ENCODE measurements at regions of chr17 and their contacts with region 1.

Region 1: DNA sequence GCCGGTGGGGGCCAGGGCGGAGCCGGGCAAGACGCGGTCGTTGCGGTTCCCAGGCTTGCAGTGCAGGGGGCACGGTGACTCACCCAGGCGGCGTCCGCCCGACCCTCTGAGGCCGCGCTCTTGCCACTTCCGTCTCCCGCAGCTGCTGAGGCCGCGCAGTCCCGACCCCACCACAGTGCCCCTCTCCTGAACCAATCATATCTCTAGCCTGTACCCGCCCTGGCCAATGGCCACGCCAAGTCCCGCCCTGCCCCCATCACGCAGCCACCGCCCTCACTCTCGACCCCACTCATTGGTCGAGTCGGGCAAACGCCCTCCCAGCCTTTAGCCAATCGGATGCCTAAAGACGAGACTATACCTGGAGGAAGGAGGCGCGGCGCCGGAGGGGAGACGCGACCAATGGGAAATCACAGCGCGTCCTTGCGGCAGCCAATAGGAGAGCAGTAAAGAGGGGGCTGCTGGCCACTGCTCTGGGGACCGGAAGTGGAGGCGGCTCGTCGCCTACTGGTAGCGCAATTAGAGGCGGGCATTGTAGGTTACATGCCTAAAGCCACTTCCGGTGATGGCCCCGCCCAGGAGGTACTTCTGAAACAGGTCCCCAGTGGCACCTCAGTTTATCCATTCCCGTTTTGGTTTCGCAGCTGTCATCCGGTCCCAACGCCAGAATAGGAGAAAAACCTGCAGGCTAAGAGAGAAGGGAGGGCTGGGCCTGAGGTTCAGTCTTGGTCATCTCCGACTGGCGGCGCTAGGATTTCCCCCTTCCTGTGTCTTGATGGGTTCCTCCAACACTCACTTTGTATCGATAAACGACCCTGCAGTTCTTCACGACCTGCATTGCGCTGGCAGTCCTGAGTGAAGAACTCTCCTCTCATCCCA is 3.5 kb upstream of the MTMR4 start:
- DNase-seq: peak; percentile 92 to 100 (median 100)
- ATAC-seq: peak; percentile 89
- H3K4me3 ChIP-seq: peak overlapping the region; percentile 99
- H3K4me3 Mint-ChIP-seq: peak overlapping the region; percentile 92 to 98 (median 96)
- H3K27ac ChIP-seq: peak overlapping the region; percentile 84
- H3K27ac Mint-ChIP-seq: peak overlapping the region; percentile 82 to 97 (median 95)
- H3K4me1 ChIP-seq: peaks cover 20 to 28% of the 10 kb centered on the region in 2 donors
- H3K4me1 Mint-ChIP-seq: peaks cover 30 to 49% (median 46%) of the 10 kb centered on the region in 7 donors
- H3K27me3 ChIP-seq: no peaks in the 10 kb centered on the region
- H3K27me3 Mint-ChIP-seq: peaks cover 0 to 5% (median 0%) of the 10 kb centered on the region in 5 donors

Region 2: GRCh38 chr17:57849874-57850754 is 667.9 kb before region 1 on chr17 and contains the start of gene MRPS23:
- CTCF ChIA-PET with region 1: no interaction called
- POLR2A ChIA-PET with region 1: no interaction called
- intact Hi-C with region 1: loop called in 1 of 2 experiments (anchors 1 kb)
- DNase-seq: peak; percentile 85 to 98 (median 94)
- ATAC-seq: peak; percentile 99
- H3K4me3 ChIP-seq: peak within 1 kb of the TSS; percentile 88
- H3K4me3 Mint-ChIP-seq: peak within 1 kb of the TSS; percentile 92 to 100 (median 99)
- H3K27ac ChIP-seq: peak within 1 kb of the TSS; percentile 86
- H3K27ac Mint-ChIP-seq: peak within 1 kb of the TSS; percentile 97 to 100 (median 100)
- H3K4me1 ChIP-seq: peaks cover 20 to 27% of the 10 kb centered on the region in 2 donors
- H3K4me1 Mint-ChIP-seq: peaks cover 24 to 61% (median 49%) of the 10 kb centered on the region in 7 donors
- H3K27me3 ChIP-seq: no peaks in the 10 kb centered on the region
- H3K27me3 Mint-ChIP-seq: no peaks in the 10 kb centered on the region
- total RNA-seq, gene MRPS23: 13.0 to 40.5 (median 24.6) TPM

Region 3: DNA sequence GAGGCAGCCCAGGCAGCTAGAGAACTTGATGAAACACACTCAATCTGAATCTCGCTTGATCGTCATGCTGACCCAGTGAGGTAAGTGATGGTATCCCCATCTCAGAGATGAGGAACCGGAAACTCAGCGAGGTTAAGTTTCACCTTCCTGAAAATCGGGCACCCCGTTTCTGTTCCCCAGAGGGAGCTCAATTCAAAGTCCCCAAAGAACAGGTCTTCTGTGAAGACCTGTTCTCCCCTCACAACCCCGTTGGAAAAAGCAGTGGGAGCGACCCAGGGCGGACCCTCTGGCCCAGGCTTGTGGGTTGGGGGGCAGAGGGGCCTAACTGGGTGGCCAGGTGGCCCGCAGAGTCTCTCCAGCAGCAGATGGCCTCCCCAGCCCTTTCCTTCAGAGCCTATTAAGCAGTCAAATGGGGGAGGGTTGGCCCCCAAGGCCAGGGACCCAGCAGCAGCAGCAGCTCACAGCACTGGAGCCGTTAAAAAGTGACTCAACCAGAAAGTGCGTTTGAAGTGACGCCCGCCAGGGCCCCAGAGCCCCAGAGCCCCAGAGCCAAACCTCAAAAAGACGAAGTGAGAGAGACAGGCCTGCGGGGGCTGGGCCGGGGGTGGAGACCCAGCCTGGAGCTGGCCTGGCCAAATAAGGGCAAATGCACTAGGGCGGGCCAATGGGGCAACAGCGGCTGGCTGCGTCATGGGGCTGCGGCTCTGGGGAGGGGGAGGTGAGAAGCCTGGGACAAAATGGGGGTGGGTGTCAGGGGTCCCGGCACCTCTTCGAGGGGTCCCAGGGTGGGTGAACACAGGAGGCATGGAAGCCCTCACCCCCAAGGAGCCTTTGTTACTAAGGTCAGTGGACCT is 180.1 kb before region 1 on chr17:
- CTCF ChIA-PET with region 1: no interaction called
- POLR2A ChIA-PET with region 1: interaction called, 6 read pairs
- intact Hi-C with region 1: loop called (anchors 2 to 5 kb)
- DNase-seq: peak; percentile 73 to 93 (median 85)
- ATAC-seq: peak; percentile 88
- H3K4me3 ChIP-seq: peak overlapping the region; percentile 98
- H3K4me3 Mint-ChIP-seq: peak overlapping the region; percentile 86 to 100 (median 97)
- H3K27ac ChIP-seq: peak overlapping the region; percentile 98
- H3K27ac Mint-ChIP-seq: peak overlapping the region; percentile 89 to 100 (median 95)
- H3K4me1 ChIP-seq: peaks cover 59 to 77% of the 10 kb centered on the region in 2 donors
- H3K4me1 Mint-ChIP-seq: peaks cover 52 to 90% (median 65%) of the 10 kb centered on the region in 7 donors
- H3K27me3 ChIP-seq: no peaks in the 10 kb centered on the region
- H3K27me3 Mint-ChIP-seq: no peaks in the 10 kb centered on the region

Region 4: DNA sequence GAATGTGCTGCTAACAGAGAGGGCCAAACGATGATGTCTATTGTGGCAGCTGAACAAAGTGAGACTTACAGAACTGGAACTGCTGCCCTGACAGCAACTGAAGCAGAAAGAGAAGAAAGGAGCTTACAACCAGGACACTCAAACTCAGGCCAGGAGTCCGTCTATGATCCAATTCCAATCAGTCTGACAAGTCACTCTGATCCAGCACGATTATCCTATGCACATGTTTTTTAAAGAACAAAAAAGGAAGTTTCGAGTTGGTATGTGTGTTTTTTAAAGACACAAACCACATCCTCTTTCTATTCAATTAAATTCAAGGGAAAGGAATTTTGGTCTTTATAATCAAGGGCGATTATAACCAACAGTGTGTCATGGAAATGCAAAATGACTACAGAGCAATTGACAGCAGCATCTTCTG is 38.9 kb after region 1 on chr17:
- CTCF ChIA-PET with region 1: no interaction called
- POLR2A ChIA-PET with region 1: no interaction called
- intact Hi-C with region 1: no loop called
- DNase-seq: no peak
- ATAC-seq: peak; percentile 27
- H3K4me3 ChIP-seq: no peak overlapping the region
- H3K4me3 Mint-ChIP-seq: peak overlapping the region in 5 of 10 donors; percentile 3 to 35 (median 20)
- H3K27ac ChIP-seq: peak overlapping the region; percentile 29
- H3K27ac Mint-ChIP-seq: peak overlapping the region in 6 of 9 donors; percentile 0 to 72 (median 42)
- H3K4me1 ChIP-seq: no peaks in the 10 kb centered on the region
- H3K4me1 Mint-ChIP-seq: peaks cover 6 to 15% (median 7%) of the 10 kb centered on the region in 7 donors
- H3K27me3 ChIP-seq: no peaks in the 10 kb centered on the region
- H3K27me3 Mint-ChIP-seq: peaks cover 0 to 8% (median 0%) of the 10 kb centered on the region in 5 donors

Region 5: GRCh38 chr17:58631523-58632323 is 113.8 kb after region 1 on chr17:
- CTCF ChIA-PET with region 1: interaction called, 5 read pairs
- POLR2A ChIA-PET with region 1: interaction called, 32 read pairs
- intact Hi-C with region 1: loop called (anchors 1 kb)
- DNase-seq: peak; percentile 74 to 95 (median 92)
- ATAC-seq: peak; percentile 90
- H3K4me3 ChIP-seq: peak overlapping the region; percentile 46
- H3K4me3 Mint-ChIP-seq: no peak overlapping the region
- H3K27ac ChIP-seq: peak overlapping the region; percentile 78
- H3K27ac Mint-ChIP-seq: no peak overlapping the region
- H3K4me1 ChIP-seq: peaks cover 6 to 12% of the 10 kb centered on the region in 2 donors
- H3K4me1 Mint-ChIP-seq: peaks cover 0 to 9% (median 5%) of the 10 kb centered on the region in 7 donors
- H3K27me3 ChIP-seq: no peaks in the 10 kb centered on the region
- H3K27me3 Mint-ChIP-seq: peaks cover 0 to 2% (median 0%) of the 10 kb centered on the region in 5 donors

Region 6: DNA sequence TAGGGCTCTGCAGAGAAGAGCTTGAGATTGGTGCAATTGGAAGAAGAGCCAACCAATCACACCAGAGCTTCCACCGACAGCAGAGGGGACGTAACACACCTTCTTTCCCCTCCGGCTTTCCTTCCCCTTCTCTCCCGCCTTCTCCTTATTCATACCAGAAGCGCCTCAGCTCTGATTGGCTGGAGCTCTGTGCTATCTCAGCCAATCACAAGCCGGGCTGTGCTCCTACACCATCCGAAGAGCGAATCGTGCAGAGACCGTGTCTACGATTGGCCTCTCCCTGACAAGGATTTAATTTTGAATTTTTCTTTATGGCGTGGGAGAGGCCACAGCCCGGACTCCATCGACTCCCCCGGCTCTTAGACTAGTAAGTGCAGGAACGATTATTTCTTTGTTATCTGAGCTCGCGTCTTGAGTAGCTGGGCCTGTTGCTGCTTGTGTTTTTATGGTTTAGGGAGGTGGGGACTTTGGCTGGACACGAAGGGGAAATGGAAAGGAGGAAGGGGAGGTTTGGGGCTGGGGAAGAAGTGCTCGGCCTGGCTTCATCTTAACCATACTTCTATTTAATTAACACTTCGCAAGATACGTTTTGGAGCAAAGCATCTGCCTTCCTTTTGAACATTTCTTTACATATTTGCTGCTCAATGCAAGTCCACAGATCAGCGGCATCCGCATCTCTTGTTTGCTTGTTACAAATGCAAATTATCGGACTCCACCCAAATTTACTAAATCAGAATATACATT is 637.6 kb after region 1 on chr17 and contains the start of gene PRR11:
- CTCF ChIA-PET with region 1: no interaction called
- POLR2A ChIA-PET with region 1: interaction called, 4 read pairs
- intact Hi-C with region 1: loop called (anchors 1 kb)
- DNase-seq: peak in 6 of 9 donors; percentile 62 to 99 (median 98)
- ATAC-seq: peak; percentile 91
- H3K4me3 ChIP-seq: peak within 1 kb of the TSS; percentile 89
- H3K4me3 Mint-ChIP-seq: no peak within 1 kb of the TSS
- H3K27ac ChIP-seq: peak within 1 kb of the TSS; percentile 75
- H3K27ac Mint-ChIP-seq: no peak within 1 kb of the TSS
- H3K4me1 ChIP-seq: peaks cover 10 to 13% of the 10 kb centered on the region in 2 donors
- H3K4me1 Mint-ChIP-seq: peaks cover 8 to 52% (median 36%) of the 10 kb centered on the region in 7 donors
- H3K27me3 ChIP-seq: no peaks in the 10 kb centered on the region
- H3K27me3 Mint-ChIP-seq: no peaks in the 10 kb centered on the region
- total RNA-seq, gene PRR11: 0.61 to 41.9 (median 1.00) TPM

Region 7: DNA sequence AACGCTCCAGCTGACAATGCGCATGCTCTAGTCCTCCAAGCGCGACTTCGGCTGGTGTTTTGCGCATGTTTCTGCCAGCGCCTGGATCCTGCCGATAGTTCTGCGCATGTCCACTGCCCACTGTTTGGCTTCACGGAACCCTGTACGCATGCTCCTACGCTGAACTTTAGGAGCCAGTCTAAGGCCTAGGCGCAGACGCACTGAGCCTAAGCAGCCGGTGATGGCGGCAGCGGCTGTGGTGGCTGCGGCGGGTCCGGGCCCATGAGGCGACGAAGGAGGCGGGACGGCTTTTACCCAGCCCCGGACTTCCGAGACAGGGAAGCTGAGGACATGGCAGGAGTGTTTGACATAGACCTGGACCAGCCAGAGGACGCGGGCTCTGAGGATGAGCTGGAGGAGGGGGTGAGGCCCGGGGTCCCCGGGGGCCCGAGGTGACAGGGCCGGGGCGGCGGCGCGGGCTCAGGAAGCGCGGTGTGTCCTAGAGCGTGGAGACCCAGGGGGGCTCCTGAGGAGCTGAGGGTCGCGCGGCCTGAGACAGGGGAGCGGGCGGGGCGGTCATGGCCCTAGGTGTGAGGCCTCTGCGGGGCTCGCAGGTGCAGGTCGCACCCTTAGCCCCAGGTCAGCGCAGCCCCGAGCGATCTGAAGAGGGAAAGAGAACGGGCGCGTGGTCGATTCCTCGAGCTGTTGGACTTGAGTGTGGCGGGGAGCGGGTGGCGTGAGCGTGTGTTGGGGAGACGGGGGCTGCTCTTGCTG is 1375.1 kb after region 1 on chr17 and contains the starts of genes RPS6KB1 and TUBD1:
- CTCF ChIA-PET with region 1: no interaction called
- POLR2A ChIA-PET with region 1: no interaction called
- intact Hi-C with region 1: loop called in 1 of 2 experiments (anchors 2 kb)
- DNase-seq: peak; percentile 87 to 99 (median 98)
- ATAC-seq: peak; percentile 96
- H3K4me3 ChIP-seq: peak within 1 kb of the TSS; percentile 74
- H3K4me3 Mint-ChIP-seq: peak within 1 kb of the TSS; percentile 97 to 100 (median 99)
- H3K27ac ChIP-seq: peak within 1 kb of the TSS; percentile 93
- H3K27ac Mint-ChIP-seq: peak within 1 kb of the TSS; percentile 98 to 100 (median 100)
- H3K4me1 ChIP-seq: peaks cover 13 to 23% of the 10 kb centered on the region in 2 donors
- H3K4me1 Mint-ChIP-seq: peaks cover 43 to 83% (median 67%) of the 10 kb centered on the region in 7 donors
- H3K27me3 ChIP-seq: no peaks in the 10 kb centered on the region
- H3K27me3 Mint-ChIP-seq: peaks cover 0 to 4% (median 0%) of the 10 kb centered on the region in 5 donors
- total RNA-seq, gene RPS6KB1: 62.0 to 107 (median 71.5) TPM
- total RNA-seq, gene TUBD1: 8.2 to 42.1 (median 14.3) TPM

Measured in naive thymus-derived CD4-positive, alpha-beta T cell (primary cell).